Activated CD8-positive, alpha-beta T cell treated with anti-CD3 and anti-CD28 coated beads for 36 hours (primary cell): ENCODE measurements at regions of chr20 and their contacts with region 1.

Region 1: DNA sequence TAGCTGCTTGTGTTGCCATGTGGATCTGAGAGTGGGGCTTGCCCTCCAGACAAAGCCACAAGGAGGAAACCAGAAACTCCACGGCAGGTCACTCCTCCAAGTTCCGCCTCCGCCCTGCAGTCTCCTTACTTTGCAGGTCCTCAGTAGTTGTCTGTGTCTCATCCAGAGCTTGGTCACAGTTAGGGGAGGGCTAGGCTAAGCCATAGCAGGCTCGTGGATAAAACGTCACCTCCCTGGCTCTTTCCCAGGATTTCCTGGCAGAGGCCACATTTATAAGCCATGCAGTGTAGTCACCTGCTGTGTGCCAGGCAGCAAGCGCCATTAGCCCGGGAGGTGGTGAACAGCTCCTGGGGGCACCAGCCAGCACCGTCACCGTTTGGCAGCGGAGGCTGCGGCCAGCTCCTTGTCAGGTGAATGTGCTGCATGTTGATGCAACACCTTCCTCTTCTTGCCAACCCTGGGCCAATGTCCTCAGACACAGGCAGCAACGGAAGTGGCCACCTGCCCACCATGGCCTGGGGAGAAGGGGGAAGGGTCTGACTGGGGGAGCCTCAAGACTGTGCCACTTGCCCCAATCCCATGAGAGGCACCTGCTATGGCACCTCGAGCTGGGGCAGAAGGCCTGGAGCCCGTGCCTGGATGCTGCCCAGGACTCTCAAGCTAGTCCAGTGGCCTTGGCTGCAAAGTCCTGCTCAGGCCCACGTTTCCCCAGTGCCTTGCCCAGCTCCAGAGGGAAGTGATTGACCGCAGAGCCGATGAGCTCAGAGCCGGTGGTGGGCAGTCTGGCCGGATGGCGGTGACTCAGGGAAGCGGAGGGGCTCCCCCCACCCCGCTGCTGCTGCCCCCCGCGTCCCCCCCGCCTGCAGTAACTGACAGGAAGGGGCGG is 39.0 kb upstream of the SLCO4A1 start:
- DNase-seq: peak; percentile 90
- ATAC-seq: peak; percentile 70
- H3K4me3 Mint-ChIP-seq: peak overlapping the region; percentile 68
- H3K27ac Mint-ChIP-seq: peak overlapping the region; percentile 85
- H3K4me1 Mint-ChIP-seq: peaks cover 18% of the 10 kb centered on the region
- H3K27me3 Mint-ChIP-seq: peaks cover 21% of the 10 kb centered on the region
- CTCF ChIP-seq: no peak

Region 2: GRCh38 chr20:62500237-62500864 is 102.9 kb before region 1 on chr20:
- CTCF ChIA-PET with region 1: interaction called, 10 read pairs
- POLR2A ChIA-PET with region 1: no interaction called
- intact Hi-C with region 1: no loop called
- DNase-seq: peak; percentile 85
- ATAC-seq: peak; percentile 22
- H3K4me3 Mint-ChIP-seq: no peak overlapping the region
- H3K27ac Mint-ChIP-seq: peak overlapping the region; percentile 95
- H3K4me1 Mint-ChIP-seq: peaks cover 31% of the 10 kb centered on the region
- H3K27me3 Mint-ChIP-seq: peaks cover 4% of the 10 kb centered on the region
- CTCF ChIP-seq: peak; percentile 80

Region 3: DNA sequence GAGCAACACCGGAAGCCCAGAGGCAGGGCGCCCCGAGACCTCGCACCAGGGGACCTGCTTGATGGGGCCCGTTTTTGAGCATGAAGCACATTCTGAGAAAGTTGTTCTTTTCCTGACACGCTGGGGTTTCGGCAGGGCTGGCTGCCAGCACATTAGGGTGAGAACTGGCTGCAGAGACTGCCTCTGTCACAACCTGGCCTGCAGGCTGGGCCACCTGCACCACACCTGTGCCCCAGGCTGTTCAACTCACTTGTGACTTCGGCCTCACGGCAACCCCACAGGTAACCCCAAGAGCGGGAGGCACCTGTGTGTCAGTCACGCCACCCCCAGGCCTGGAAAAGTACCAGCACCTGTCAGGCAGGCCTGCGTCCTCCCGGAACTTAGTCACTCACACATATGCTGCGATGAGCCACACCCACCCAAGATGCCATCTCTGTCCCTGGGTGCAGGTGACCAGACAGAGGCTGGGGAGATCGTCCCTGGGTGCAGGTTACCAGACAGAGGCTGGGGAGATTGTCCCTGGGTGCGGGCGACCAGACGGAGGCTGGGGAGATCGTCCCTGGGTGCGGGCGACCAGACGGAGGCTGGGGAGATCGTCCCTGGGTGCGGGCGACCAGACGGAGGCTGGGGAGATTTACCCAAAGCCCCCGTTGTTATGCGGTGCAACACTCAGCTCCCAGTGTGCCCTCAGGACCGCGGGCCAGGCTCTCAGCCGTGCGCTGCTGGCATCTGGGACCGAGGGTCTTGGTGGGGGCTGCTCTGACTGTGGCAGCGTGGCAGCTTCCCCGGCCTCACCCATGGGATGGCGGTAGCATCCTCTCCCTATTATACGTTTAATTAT is 486.0 kb after region 1 on chr20:
- CTCF ChIA-PET with region 1: no interaction called
- POLR2A ChIA-PET with region 1: no interaction called
- intact Hi-C with region 1: no loop called
- DNase-seq: no peak
- ATAC-seq: no peak
- H3K4me3 Mint-ChIP-seq: no peak overlapping the region
- H3K27ac Mint-ChIP-seq: no peak overlapping the region
- H3K4me1 Mint-ChIP-seq: peaks cover 3% of the 10 kb centered on the region
- H3K27me3 Mint-ChIP-seq: peaks cover 14% of the 10 kb centered on the region
- CTCF ChIP-seq: no peak